Adrenal gland (tissue), 19 donors: ENCODE measurements at regions of chr22 and their contacts with region 1.

Region 1: GRCh38 chr22:39490135-39490798 is 11.8 kb upstream of the MIEF1 start:
- DNase-seq: peak; percentile 78 to 93 (median 87)
- H3K4me3 ChIP-seq: no peak overlapping the region
- H3K27ac ChIP-seq: no peak overlapping the region
- H3K4me1 ChIP-seq: peaks cover 0 to 5% of the 10 kb centered on the region in 2 donors
- H3K27me3 ChIP-seq: no peaks in the 10 kb centered on the region
- CTCF ChIP-seq: no peak
- POLR2A ChIP-seq: no peak

Region 2: GRCh38 chr22:39405346-39406085 is 84.8 kb before region 1 on chr22:
- intact Hi-C with region 1: loop called in 1 of 2 experiments (anchors 10 kb)
- DNase-seq: peak in 1 of 7 donors; percentile 43
- H3K4me3 ChIP-seq: no peak overlapping the region
- H3K27ac ChIP-seq: peak overlapping the region in 2 of 5 donors; percentile 39 to 49
- H3K4me1 ChIP-seq: peaks cover 2 to 14% of the 10 kb centered on the region in 2 donors
- H3K27me3 ChIP-seq: no peaks in the 10 kb centered on the region
- CTCF ChIP-seq: no peak
- POLR2A ChIP-seq: no peak

Region 3: DNA sequence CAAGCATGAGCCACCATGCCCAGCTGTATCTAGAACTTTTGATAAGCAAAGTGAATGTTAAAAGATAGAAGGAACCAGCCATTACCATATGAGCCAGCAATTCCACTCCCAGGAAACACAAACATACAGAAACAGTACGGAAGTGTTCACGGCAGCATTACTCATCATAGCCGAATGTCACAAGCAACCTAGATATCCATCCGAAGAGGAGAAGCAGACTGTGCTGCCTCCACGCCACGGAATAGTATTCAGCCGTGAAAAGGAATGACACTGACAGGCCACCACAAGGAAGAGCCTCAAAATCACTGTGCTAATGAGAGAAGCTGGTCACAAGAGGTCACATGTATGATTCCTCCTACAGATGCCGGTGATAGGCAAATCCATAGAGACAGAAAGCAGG is 51.1 kb before region 1 on chr22:
- intact Hi-C with region 1: loop called in 1 of 2 experiments (anchors 10 kb)
- DNase-seq: no peak
- H3K4me3 ChIP-seq: no peak overlapping the region
- H3K27ac ChIP-seq: no peak overlapping the region
- H3K4me1 ChIP-seq: peaks cover 0 to 34% of the 10 kb centered on the region in 2 donors
- H3K27me3 ChIP-seq: no peaks in the 10 kb centered on the region
- CTCF ChIP-seq: no peak
- POLR2A ChIP-seq: no peak

Region 4: GRCh38 chr22:39532215-39533071 is 42.2 kb after region 1 on chr22 and contains the start of gene RPS19BP1:
- intact Hi-C with region 1: loop called (anchors 5 kb)
- DNase-seq: peak; percentile 99 to 100 (median 100)
- H3K4me3 ChIP-seq: peak within 1 kb of the TSS; percentile 51 to 78 (median 64)
- H3K27ac ChIP-seq: peak within 1 kb of the TSS; percentile 49 to 91 (median 87)
- H3K4me1 ChIP-seq: peaks cover 18 to 54% of the 10 kb centered on the region in 2 donors
- H3K27me3 ChIP-seq: no peaks in the 10 kb centered on the region
- CTCF ChIP-seq: peak in 1 of 6 experiments; percentile 23
- POLR2A ChIP-seq: peak; percentile 58 to 86
- total RNA-seq, gene RPS19BP1: 80.4 to 250 (median 139) TPM